CD8-positive, alpha-beta T cell (primary cell): ENCODE measurements at regions of chr11 and their contacts with region 1.

Region 1: GRCh38 chr11:76318744-76319384 is 62.1 kb downstream of the THAP12 start:
- DNase-seq: peak; percentile 69 to 93 (median 87)
- ATAC-seq: peak; percentile 95
- H3K4me3 ChIP-seq: no peak overlapping the region
- H3K4me3 Mint-ChIP-seq: no peak overlapping the region
- H3K27ac ChIP-seq: no peak overlapping the region
- H3K27ac Mint-ChIP-seq: no peak overlapping the region
- H3K4me1 ChIP-seq: no peaks in the 10 kb centered on the region
- H3K4me1 Mint-ChIP-seq: no peaks in the 10 kb centered on the region
- H3K27me3 ChIP-seq: peaks cover 9 to 10% of the 10 kb centered on the region in 2 experiments
- H3K27me3 Mint-ChIP-seq: peaks cover 36% of the 10 kb centered on the region
- CTCF ChIP-seq: peak; percentile 77

Region 2: GRCh38 chr11:75802913-75803820 is 515.7 kb before region 1 on chr11:
- CTCF ChIA-PET with region 1: interaction called, 6 read pairs
- POLR2A ChIA-PET with region 1: no interaction called
- intact Hi-C with region 1: loop called in 1 of 2 experiments (anchors 1 kb)
- DNase-seq: peak; percentile 51 to 80 (median 75)
- ATAC-seq: peak; percentile 98
- H3K4me3 ChIP-seq: no peak overlapping the region
- H3K4me3 Mint-ChIP-seq: no peak overlapping the region
- H3K27ac ChIP-seq: no peak overlapping the region
- H3K27ac Mint-ChIP-seq: no peak overlapping the region
- H3K4me1 ChIP-seq: no peaks in the 10 kb centered on the region
- H3K4me1 Mint-ChIP-seq: peaks cover 5% of the 10 kb centered on the region
- H3K27me3 ChIP-seq: no peaks in the 10 kb centered on the region
- H3K27me3 Mint-ChIP-seq: no peaks in the 10 kb centered on the region
- CTCF ChIP-seq: peak; percentile 91

Region 3: DNA sequence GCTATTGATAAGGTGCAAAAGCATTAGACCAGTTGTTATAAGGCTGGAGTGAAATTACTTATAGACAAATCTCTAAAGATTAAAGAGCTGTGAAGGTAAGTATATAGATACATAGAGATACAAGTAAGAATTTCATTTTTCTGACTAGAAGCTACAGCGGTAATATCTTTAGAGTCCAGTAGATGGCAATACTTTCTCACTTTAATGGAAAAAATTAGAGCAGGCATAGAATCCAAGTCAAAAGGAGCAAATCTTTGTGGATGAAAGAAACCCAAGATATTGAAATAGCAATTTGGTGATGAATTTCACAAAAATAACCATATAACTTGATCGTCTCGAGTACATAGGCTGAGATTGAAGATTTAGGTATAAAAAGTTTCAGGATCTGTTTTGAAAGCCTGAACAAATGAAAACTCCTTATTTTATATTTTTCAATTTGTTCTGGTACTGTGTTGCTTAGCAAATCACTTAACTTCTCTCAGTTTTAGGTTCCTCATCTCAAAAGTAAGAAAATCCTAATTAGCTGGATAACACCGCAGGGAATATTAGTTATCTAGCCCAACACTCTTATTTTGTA is 421.9 kb before region 1 on chr11:
- CTCF ChIA-PET with region 1: interaction called, 31 read pairs
- POLR2A ChIA-PET with region 1: no interaction called
- intact Hi-C with region 1: loop called in 1 of 2 experiments (anchors 1 kb)
- DNase-seq: peak in 2 of 9 experiments; percentile 31 to 48
- ATAC-seq: peak; percentile 46
- H3K4me3 ChIP-seq: no peak overlapping the region
- H3K4me3 Mint-ChIP-seq: no peak overlapping the region
- H3K27ac ChIP-seq: no peak overlapping the region
- H3K27ac Mint-ChIP-seq: no peak overlapping the region
- H3K4me1 ChIP-seq: no peaks in the 10 kb centered on the region
- H3K4me1 Mint-ChIP-seq: peaks cover 1% of the 10 kb centered on the region
- H3K27me3 ChIP-seq: no peaks in the 10 kb centered on the region
- H3K27me3 Mint-ChIP-seq: no peaks in the 10 kb centered on the region
- CTCF ChIP-seq: peak; percentile 85

Region 4: DNA sequence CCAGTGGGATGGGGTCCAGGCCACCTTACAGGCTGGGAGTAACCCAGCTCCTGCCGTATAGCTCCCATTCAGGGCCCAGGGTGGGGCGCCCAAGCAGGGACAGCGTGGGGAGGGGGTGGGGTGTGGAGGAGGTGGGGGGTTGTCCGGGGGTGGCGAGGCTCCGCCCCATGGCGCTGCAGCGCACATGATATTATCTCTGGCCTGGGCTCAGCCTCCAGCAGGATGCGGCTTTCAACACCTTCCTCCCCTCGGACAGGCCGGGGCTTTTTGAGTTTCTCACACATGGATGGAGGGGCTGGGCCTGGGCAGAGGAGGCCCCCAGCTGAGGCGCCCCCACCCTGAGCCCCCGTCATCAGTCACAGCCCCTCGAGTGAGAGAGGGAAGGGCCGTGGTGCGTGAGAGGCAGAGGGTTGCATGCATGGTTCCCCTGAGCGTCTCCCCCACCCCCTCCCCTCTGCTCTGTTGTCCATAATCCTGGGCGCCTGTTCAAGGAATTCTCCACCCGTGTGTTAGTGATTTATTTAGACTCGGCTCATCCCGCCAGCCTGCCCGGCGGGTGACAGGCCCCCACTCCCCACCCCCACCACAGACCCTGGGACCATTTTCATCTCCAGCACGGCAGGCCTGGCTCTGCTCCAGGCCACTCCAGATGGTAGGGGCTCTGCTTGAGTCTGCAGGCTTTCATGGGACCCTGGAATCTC is 157.5 kb before region 1 on chr11:
- CTCF ChIA-PET with region 1: no interaction called
- POLR2A ChIA-PET with region 1: no interaction called
- intact Hi-C with region 1: no loop called
- DNase-seq: peak in 2 of 9 experiments; percentile 24 to 51
- ATAC-seq: no peak
- H3K4me3 ChIP-seq: no peak overlapping the region
- H3K4me3 Mint-ChIP-seq: no peak overlapping the region
- H3K27ac ChIP-seq: no peak overlapping the region
- H3K27ac Mint-ChIP-seq: no peak overlapping the region
- H3K4me1 ChIP-seq: no peaks in the 10 kb centered on the region
- H3K4me1 Mint-ChIP-seq: no peaks in the 10 kb centered on the region
- H3K27me3 ChIP-seq: no peaks in the 10 kb centered on the region
- H3K27me3 Mint-ChIP-seq: peaks cover 3% of the 10 kb centered on the region
- CTCF ChIP-seq: no peak

Region 5: DNA sequence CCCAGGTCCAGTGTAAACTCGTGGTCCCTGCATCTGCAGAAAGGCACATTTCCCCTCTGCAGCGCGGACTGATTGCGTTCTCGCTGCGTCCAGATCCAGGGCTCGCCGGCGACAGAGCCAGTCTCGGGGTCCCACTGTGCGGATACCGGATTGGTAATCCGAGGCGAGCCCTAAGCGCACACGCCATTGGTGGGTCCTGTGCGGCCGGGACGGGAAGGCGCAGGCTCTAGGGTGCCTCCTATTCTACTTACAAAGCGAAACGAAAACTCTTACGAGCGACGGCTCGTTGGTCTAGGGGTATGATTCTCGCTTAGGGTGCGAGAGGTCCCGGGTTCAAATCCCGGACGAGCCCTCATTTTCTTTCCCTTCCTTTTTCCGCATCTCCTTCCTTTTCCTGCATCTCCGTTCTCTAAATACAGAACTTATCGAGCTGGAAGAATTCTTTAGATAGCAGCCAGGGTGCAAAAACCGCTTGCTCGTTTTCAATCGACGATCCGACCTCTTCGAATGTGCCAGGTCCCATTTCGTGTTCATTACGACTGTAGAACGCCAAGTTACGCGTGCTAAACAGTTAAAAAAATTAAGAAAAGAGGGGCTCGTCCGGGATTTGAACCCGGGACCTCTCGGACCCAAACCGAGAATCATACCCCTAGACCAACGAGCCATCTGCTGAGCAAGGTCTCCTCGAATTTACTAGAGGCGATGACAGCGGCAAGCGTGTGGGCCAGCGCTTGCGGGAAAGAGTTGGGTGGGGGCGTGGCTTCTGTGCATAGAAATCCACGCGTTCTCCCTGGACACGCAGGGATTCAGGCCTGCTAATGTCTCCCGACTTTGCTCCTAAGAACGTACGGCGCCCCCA is 83.4 kb before region 1 on chr11:
- CTCF ChIA-PET with region 1: interaction called, 8 read pairs
- POLR2A ChIA-PET with region 1: no interaction called
- intact Hi-C with region 1: loop called in 1 of 2 experiments (anchors 1 kb)
- DNase-seq: peak; percentile 84 to 96 (median 89)
- ATAC-seq: peak; percentile 84
- H3K4me3 ChIP-seq: peak overlapping the region; percentile 86 to 99
- H3K4me3 Mint-ChIP-seq: peak overlapping the region; percentile 90
- H3K27ac ChIP-seq: peak overlapping the region; percentile 61 to 63
- H3K27ac Mint-ChIP-seq: peak overlapping the region; percentile 89
- H3K4me1 ChIP-seq: peaks cover 47% of the 10 kb centered on the region
- H3K4me1 Mint-ChIP-seq: peaks cover 39% of the 10 kb centered on the region
- H3K27me3 ChIP-seq: no peaks in the 10 kb centered on the region
- H3K27me3 Mint-ChIP-seq: no peaks in the 10 kb centered on the region
- CTCF ChIP-seq: no peak

Region 6: GRCh38 chr11:76293189-76293631 is 25.7 kb before region 1 on chr11:
- CTCF ChIA-PET with region 1: interaction called, 12 read pairs
- POLR2A ChIA-PET with region 1: no interaction called
- intact Hi-C with region 1: no loop called
- DNase-seq: no peak
- ATAC-seq: peak; percentile 36
- H3K4me3 ChIP-seq: no peak overlapping the region
- H3K4me3 Mint-ChIP-seq: peak overlapping the region; percentile 47
- H3K27ac ChIP-seq: no peak overlapping the region
- H3K27ac Mint-ChIP-seq: peak overlapping the region; percentile 79
- H3K4me1 ChIP-seq: peaks cover 22% of the 10 kb centered on the region
- H3K4me1 Mint-ChIP-seq: peaks cover 25% of the 10 kb centered on the region
- H3K27me3 ChIP-seq: no peaks in the 10 kb centered on the region
- H3K27me3 Mint-ChIP-seq: no peaks in the 10 kb centered on the region
- CTCF ChIP-seq: no peak

Region 7: GRCh38 chr11:76329084-76329984 is 10.5 kb after region 1 on chr11:
- CTCF ChIA-PET with region 1: interaction called, 20 read pairs
- POLR2A ChIA-PET with region 1: no interaction called
- intact Hi-C with region 1: no loop called
- DNase-seq: no peak
- ATAC-seq: no peak
- H3K4me3 ChIP-seq: no peak overlapping the region
- H3K4me3 Mint-ChIP-seq: no peak overlapping the region
- H3K27ac ChIP-seq: no peak overlapping the region
- H3K27ac Mint-ChIP-seq: no peak overlapping the region
- H3K4me1 ChIP-seq: no peaks in the 10 kb centered on the region
- H3K4me1 Mint-ChIP-seq: no peaks in the 10 kb centered on the region
- H3K27me3 ChIP-seq: no peaks in the 10 kb centered on the region
- H3K27me3 Mint-ChIP-seq: peaks cover 2% of the 10 kb centered on the region
- CTCF ChIP-seq: no peak